ENCODE measurements at regions of chr2 and their contacts with region 1.

Region 1: DNA sequence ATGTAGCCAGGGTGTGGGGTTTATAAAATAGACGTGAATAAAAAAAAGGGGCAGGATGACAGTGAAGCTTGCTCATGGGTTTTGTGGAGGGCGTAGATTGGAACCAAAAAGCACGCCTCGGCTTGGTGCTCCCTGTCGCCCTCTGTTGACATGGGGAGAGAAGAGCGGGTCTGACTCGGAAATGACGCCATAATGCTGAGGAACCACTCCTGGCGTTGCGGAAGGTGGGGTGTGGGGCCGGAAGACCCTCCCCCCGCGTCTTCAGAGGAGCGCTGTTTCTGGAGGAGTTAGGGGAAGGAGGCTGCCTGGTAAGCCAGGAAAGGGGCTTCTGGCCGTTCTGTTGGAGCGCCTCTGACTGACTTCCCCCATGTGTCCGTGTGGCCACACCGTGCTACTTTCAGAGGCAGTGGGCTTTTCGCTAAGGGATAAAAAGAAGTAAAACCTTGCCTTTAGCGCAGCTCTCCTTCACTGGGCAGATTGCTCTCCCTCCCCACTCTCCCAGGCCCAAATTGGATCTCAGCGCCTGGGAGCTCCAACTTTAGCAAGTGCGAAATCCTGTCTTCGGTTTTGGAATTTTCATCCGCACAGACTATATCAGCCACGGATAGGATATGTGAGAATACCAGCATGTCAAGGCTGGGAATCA is 42.8 kb downstream of the PLEKHA3 start:
- DNase-seq: peak; percentile 92
- ATAC-seq: peak; percentile 97
- H3K4me3 Mint-ChIP-seq: peak overlapping the region; percentile 91
- H3K27ac Mint-ChIP-seq: peak overlapping the region; percentile 88
- H3K4me1 Mint-ChIP-seq: peaks cover 51% of the 10 kb centered on the region
- H3K27me3 Mint-ChIP-seq: no peaks in the 10 kb centered on the region

Region 2: GRCh38 chr2:178450774-178451525 is 72.1 kb before region 1 on chr2 and contains the starts of genes PJVK and PRKRA:
- CTCF ChIA-PET with region 1: interaction called, 15 read pairs
- DNase-seq: peak; percentile 97
- ATAC-seq: peak; percentile 94
- H3K4me3 Mint-ChIP-seq: peak within 1 kb of the TSS; percentile 89
- H3K27ac Mint-ChIP-seq: peak within 1 kb of the TSS; percentile 89
- H3K4me1 Mint-ChIP-seq: peaks cover 28% of the 10 kb centered on the region
- H3K27me3 Mint-ChIP-seq: peaks cover 2% of the 10 kb centered on the region
- total RNA-seq, gene PJVK: 1.8 to 1.9 TPM
- total RNA-seq, gene PRKRA: 33.5 to 37.5 TPM

Region 3: DNA sequence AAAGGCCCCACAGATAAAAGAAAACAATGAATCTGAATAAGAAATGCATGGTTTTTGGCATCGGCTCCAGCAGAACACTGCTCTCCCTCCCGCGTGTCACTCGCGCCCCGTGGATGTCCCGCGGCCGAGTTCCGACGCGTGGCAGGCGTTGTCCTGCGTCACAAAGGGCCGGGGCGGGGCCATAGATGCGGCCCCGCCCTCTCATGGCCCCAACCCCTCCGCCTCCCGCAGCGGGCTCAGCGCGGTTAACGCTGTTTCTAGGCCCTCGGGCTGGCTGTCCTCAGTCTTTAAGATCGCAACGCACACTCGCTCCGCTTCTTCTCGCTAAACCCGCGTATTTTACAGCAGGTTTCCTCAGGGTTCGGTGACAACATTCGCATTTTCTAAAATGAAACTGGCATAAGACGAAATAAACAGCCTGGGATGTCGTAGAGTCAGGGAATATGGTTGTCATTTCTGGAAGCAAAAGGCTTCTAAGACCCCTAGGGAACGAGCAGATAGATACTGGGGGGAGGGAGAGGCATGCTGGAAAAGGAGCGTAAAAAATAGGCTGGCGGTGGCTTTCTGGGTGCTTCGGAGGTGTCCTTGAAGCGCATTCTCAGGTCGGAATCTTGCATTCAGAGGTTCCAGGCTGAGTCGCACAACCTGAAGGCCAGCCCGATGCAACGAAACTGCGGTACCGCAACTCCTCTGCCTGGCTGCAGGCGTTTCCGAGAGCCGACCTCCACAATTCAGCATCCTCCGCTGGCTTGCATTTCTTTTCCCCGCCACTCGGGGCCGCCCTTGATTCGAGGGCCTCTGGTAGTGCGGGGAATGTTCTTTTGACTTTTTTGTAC is 44.4 kb before region 1 on chr2 and contains the start of gene FKBP7:
- CTCF ChIA-PET with region 1: interaction called, 29 read pairs
- DNase-seq: peak; percentile 89
- ATAC-seq: peak; percentile 74
- H3K4me3 Mint-ChIP-seq: peak within 1 kb of the TSS; percentile 98
- H3K27ac Mint-ChIP-seq: peak within 1 kb of the TSS; percentile 100
- H3K4me1 Mint-ChIP-seq: peaks cover 46% of the 10 kb centered on the region
- H3K27me3 Mint-ChIP-seq: no peaks in the 10 kb centered on the region
- total RNA-seq, gene FKBP7: 4.1 to 4.6 TPM

Region 4: GRCh38 chr2:178579006-178579405 is 55.9 kb after region 1 on chr2:
- CTCF ChIA-PET with region 1: no interaction called
- DNase-seq: no peak
- ATAC-seq: no peak
- H3K4me3 Mint-ChIP-seq: no peak overlapping the region
- H3K27ac Mint-ChIP-seq: no peak overlapping the region
- H3K4me1 Mint-ChIP-seq: no peaks in the 10 kb centered on the region
- H3K27me3 Mint-ChIP-seq: no peaks in the 10 kb centered on the region

Region 5: GRCh38 chr2:178650554-178650953 is 127.5 kb after region 1 on chr2:
- CTCF ChIA-PET with region 1: no interaction called
- DNase-seq: no peak
- ATAC-seq: no peak
- H3K4me3 Mint-ChIP-seq: no peak overlapping the region
- H3K27ac Mint-ChIP-seq: no peak overlapping the region
- H3K4me1 Mint-ChIP-seq: peaks cover 4% of the 10 kb centered on the region
- H3K27me3 Mint-ChIP-seq: no peaks in the 10 kb centered on the region

Region 6: DNA sequence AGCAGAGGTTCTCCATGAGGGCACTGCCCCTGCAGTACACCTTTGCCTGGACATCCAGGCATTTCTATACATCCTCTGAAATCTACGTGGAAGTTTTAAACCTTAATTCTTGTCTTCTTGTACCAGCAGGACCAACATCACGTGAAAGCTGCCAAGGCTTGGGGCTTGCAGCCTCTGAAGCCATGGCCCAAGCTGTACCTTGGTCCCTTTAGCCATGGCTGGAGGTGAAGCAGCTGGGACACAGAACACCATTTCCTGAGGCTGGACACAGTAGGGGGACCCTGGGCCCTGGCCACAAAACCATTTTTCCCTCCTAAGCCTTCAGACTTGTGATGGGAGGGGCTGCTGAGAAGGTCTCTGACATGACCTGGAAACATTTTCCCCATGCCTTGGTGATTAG is 559.6 kb after region 1 on chr2:
- CTCF ChIA-PET with region 1: no interaction called
- DNase-seq: no peak
- ATAC-seq: no peak
- H3K4me3 Mint-ChIP-seq: no peak overlapping the region
- H3K27ac Mint-ChIP-seq: no peak overlapping the region
- H3K4me1 Mint-ChIP-seq: no peaks in the 10 kb centered on the region
- H3K27me3 Mint-ChIP-seq: no peaks in the 10 kb centered on the region

Region 7: DNA sequence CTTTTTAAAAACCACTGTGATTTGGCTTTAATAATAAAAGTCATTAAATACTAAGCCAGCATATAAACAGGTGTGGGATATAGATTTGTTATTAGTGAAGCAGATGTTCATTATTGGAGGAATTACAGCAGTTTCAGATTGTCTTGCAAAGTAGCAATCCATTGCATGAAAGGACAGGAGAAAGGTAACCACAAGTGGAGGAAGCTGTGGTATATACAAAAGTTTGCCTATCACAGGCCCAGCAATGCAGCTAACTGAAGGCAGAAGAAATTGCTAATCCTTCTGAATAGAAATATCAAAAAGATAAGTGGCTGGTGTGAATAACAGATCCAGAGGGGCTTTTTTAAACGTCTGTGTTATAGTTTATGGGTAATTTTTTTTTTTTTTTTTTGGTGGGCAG is 1138.9 kb after region 1 on chr2:
- CTCF ChIA-PET with region 1: no interaction called
- DNase-seq: no peak
- ATAC-seq: no peak
- H3K4me3 Mint-ChIP-seq: no peak overlapping the region
- H3K27ac Mint-ChIP-seq: no peak overlapping the region
- H3K4me1 Mint-ChIP-seq: no peaks in the 10 kb centered on the region
- H3K27me3 Mint-ChIP-seq: no peaks in the 10 kb centered on the region